Activated T-helper 1 cell treated with anti-CD3 and anti-CD28 coated beads, Interleukin-12 subunit alpha, Interleukin-12 subunit beta, Interleukin-2, Interleukin-4 antibody, amounts not matched to agents 30 ng/mL and 10 ng/mL and 1 ng/mL, durations not matched to agents 14 hours and 24 hours and 36 hours (primary cell): ENCODE measurements at regions of chr5 and their contacts with region 1.

Region 1: GRCh38 chr5:103041071-103041676 is 78.8 kb downstream of the GIN1 start:
- DNase-seq: no peak
- H3K4me3 Mint-ChIP-seq: no peak overlapping the region
- H3K27ac Mint-ChIP-seq: no peak overlapping the region
- H3K4me1 Mint-ChIP-seq: no peaks in the 10 kb centered on the region
- H3K27me3 Mint-ChIP-seq: peaks cover 14% of the 10 kb centered on the region

Region 2: DNA sequence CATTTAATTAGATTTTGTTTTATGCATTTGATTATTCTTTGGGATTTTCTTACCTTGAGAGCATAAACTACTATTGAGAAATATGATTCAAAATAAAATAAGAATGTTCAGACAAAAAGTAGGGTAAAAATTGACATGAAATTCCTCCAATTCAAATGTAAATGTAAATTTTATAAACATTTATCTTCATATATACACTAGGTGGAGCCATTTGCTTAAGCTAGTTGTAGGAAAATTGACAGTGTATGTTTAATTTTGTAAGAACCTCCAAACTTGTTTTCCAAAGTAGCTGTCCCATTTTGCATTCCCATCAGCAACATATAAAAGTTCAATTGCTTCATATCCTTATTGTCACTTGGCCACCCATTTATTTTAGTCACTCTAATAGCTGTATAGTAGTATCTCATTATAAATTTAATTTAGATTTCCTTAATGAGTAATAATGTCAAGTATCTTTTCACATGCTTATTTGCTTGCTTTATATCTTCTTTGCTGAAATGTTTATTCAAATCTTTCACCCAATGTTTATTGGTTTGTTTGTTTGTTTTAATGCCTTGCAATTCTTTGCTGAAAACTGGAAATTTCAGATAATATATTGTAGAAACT is 504.7 kb before region 1 on chr5:
- intact Hi-C with region 1: loop called (anchors 1 kb)
- DNase-seq: no peak
- H3K4me3 Mint-ChIP-seq: no peak overlapping the region
- H3K27ac Mint-ChIP-seq: no peak overlapping the region
- H3K4me1 Mint-ChIP-seq: no peaks in the 10 kb centered on the region
- H3K27me3 Mint-ChIP-seq: no peaks in the 10 kb centered on the region

Region 3: GRCh38 chr5:102583276-102584124 is 457.7 kb before region 1 on chr5:
- intact Hi-C with region 1: loop called (anchors 1 kb)
- DNase-seq: no peak
- H3K4me3 Mint-ChIP-seq: no peak overlapping the region
- H3K27ac Mint-ChIP-seq: no peak overlapping the region
- H3K4me1 Mint-ChIP-seq: no peaks in the 10 kb centered on the region
- H3K27me3 Mint-ChIP-seq: peaks cover 4% of the 10 kb centered on the region

Region 4: GRCh38 chr5:102792705-102793104 is 248.5 kb before region 1 on chr5:
- intact Hi-C with region 1: loop called (anchors 2 kb)
- DNase-seq: no peak
- H3K4me3 Mint-ChIP-seq: no peak overlapping the region
- H3K27ac Mint-ChIP-seq: no peak overlapping the region
- H3K4me1 Mint-ChIP-seq: peaks cover 23% of the 10 kb centered on the region
- H3K27me3 Mint-ChIP-seq: no peaks in the 10 kb centered on the region

Region 5: DNA sequence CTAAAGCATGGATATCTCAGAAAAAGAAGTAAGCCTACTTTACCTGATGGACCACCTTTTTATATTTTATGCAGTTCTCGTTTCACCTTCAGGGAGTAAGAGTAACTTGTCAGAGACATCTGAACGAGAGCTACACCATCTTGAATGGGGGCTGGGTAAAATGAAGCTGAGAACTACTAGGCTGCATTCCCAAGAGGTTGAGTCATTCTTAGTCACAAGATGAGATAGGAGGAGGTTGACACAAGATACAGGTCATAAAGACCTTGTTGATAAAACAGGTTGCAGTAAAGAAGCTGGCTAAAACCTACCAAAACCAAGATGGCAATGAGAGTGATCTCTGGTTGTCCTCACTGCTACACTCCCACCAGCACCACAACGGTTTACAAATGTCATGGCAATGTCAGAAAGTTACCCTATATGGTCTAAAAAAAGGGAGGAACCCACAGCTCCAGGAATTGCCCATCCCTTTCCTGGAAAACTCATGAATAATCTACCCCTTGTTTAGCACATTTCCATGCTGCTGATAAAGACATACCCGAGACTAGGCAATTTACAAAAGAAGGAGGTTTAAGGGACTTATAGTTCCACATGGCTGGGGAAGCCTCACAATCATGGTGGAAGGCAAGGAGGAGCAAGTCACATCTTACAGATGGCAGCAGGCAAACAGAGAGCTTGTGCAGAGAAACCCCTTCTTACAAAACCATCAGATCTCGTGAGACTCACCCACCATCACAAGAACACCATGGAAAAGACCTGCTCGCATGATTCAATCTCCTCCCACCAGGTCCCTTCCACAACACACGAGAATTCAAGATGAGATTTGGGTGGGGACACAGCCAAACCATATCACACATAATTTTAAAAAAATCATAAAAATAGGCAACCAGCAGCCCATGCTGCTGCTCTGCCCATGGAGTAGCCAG is 16.3 kb after region 1 on chr5:
- intact Hi-C with region 1: no loop called
- DNase-seq: no peak
- H3K4me3 Mint-ChIP-seq: no peak overlapping the region
- H3K27ac Mint-ChIP-seq: no peak overlapping the region
- H3K4me1 Mint-ChIP-seq: no peaks in the 10 kb centered on the region
- H3K27me3 Mint-ChIP-seq: peaks cover 1% of the 10 kb centered on the region